Left cardiac atrium (tissue), 4 donors: ENCODE measurements at regions of chr11 and their contacts with region 1.

Region 1: GRCh38 chr11:44565211-44565952 is at the start of gene CD82:
- DNase-seq: peak; percentile 100
- ATAC-seq: peak; percentile 96
- total RNA-seq, gene CD82: 22.0 to 35.3 TPM

Region 2: GRCh38 chr11:44530413-44531115 is 34.8 kb before region 1 on chr11:
- intact Hi-C with region 1: no loop called
- DNase-seq: no peak
- ATAC-seq: no peak

Region 3: GRCh38 chr11:44611687-44612434 is 46.5 kb after region 1 on chr11:
- intact Hi-C with region 1: loop called in 1 of 2 experiments (anchors 2 kb)
- DNase-seq: no peak
- ATAC-seq: peak in 1 of 2 donors; percentile 11

Region 4: GRCh38 chr11:44911029-44911814 is 345.8 kb after region 1 on chr11:
- intact Hi-C with region 1: loop called (anchors 5 to 10 kb)
- DNase-seq: peak; percentile 91
- ATAC-seq: peak; percentile 78 to 86